ENCODE measurements at regions of chr7 and their contacts with region 1.

Region 1: DNA sequence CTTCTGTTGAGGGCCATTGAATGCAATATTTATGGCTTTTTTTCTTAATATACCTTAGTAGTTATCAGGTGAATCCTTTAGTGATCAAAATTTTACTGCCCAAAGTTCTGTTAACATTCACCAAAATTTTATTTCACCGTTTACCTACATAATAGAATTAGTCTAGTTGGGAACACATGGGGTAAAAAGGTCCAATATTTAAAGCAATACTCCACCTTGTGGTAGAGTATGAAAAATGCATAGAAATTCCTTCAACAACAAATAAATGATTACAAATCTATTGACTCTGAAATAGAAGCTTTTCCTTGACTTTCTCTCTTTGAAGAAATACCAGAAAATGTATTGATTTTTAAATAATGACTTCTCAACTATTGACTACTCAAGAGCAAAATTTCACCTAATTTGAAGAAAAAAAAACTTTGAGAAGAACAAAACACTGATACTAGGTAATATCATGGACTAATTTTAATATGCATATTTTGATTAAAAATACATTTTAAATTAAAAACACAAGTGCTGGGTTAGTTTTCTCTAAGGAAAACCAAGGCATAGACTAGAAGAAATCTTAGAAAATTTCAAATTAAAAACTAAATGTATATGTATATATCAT is 43.3 kb downstream of the POLR1F start:
- ATAC-seq: peak in 2 of 8 experiments; percentile 33 to 36
- H3K4me3 ChIP-seq: no peak overlapping the region
- H3K27ac ChIP-seq: no peak overlapping the region
- H3K4me1 ChIP-seq: no peaks in the 10 kb centered on the region

Region 2: DNA sequence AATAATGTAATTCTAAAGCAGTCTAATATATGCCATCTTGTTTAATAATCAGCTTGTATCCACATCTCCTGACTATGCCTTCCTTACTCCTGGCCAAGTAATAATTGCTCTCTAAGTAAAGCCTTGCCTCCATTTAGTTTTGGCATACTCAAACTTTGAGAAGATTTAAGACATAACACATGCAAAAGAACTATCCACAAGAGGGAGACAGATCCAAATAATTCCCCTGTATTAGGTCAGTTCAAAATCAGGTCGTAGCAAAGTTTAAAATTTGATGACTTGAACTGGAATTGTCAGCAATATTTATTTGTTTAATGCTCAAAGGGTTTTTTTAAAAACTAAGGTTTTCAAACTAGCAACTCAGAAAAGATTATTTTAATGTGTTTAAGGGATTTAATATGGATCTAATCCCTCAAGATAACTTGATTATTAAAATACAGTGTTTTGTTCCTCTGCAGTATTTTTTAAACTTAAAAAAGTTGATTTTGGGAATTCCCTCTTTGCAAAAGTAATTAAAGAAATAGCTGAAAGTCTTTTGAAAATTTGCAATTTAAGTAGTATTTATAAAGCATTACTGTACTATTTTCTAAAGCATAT is 1074.7 kb before region 1 on chr7:
- in situ Hi-C with region 1: loop called in 1 of 9 experiments (anchors 25 kb)
- ATAC-seq: peak in 4 of 8 experiments; percentile 26 to 95 (median 86)
- H3K4me3 ChIP-seq: no peak overlapping the region
- H3K27ac ChIP-seq: no peak overlapping the region
- H3K4me1 ChIP-seq: no peaks in the 10 kb centered on the region

Region 3: DNA sequence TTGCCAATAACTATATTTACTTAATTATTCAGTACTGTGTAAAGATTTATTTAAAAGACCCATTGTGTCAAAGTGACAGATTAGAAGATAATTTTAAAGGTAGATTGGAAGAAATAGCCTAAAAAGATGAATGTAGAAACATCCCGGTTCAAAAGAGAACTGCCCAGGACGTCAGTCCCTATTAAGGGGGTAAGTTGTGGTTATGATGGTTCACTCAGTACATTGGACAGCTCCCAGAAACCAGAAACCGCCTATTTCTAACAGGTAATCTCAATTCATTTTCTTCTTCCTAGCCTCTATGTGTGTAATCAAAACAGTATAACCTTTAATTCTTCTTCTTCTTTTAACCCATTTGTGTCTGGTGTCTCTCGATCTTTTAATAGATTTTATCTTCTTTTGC is 518.8 kb before region 1 on chr7:
- in situ Hi-C with region 1: loop called in 1 of 9 experiments (anchors 25 kb)
- ATAC-seq: peak in 1 of 8 experiments; percentile 25
- H3K4me3 ChIP-seq: no peak overlapping the region
- H3K27ac ChIP-seq: no peak overlapping the region
- H3K4me1 ChIP-seq: no peaks in the 10 kb centered on the region

Region 4: GRCh38 chr7:20095436-20095835 is 429.9 kb after region 1 on chr7:
- in situ Hi-C with region 1: no loop called
- ATAC-seq: no peak
- H3K4me3 ChIP-seq: no peak overlapping the region
- H3K27ac ChIP-seq: no peak overlapping the region
- H3K4me1 ChIP-seq: peaks cover 0 to 20% of the 10 kb centered on the region in 2 donors